Tibial artery (tissue), 4 donors: ENCODE measurements at regions of chr1 and their contacts with region 1.

Region 1: GRCh38 chr1:236523701-236524141 is at the start of gene LGALS8:
- DNase-seq: peak; percentile 90 to 93
- H3K4me3 ChIP-seq: peak within 1 kb of the TSS; percentile 87 to 92
- H3K27ac ChIP-seq: peak within 1 kb of the TSS; percentile 83 to 85
- H3K4me1 ChIP-seq: peaks cover 0 to 11% (median 2%) of the 10 kb centered on the region in 4 donors
- H3K27me3 ChIP-seq: no peaks in the 10 kb centered on the region
- CTCF ChIP-seq: no peak

Region 2: DNA sequence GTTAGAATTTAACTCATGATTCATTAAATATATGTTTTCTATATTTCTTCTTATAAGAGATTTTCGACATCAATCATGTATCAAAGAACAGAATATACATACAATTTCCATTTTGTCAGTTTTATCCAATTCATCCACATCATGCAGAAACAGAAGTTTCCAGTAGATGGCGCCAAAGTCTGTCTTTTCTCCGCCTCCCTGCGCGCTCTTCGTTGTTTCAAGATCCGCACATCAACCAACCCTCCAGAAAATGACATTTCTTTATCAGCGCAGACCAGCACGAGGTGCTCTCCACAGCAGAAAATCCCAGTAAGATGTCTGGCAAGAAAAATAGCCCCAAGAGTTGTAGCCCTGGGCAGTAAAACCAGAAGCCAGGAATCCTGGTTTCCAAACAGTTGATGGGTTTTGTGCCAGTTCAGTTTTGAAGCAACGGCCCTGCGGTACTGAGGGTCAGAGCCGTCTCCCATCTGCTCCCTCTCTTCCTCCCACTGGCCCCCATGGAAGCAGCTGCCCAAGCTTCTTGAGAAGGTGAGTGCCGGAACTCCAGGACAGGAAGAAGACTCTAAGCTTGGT is 420.0 kb before region 1 on chr1:
- intact Hi-C with region 1: loop called (anchors 10 kb)
- DNase-seq: peak in 1 of 2 donors; percentile 50
- H3K4me3 ChIP-seq: no peak overlapping the region
- H3K27ac ChIP-seq: no peak overlapping the region
- H3K4me1 ChIP-seq: no peaks in the 10 kb centered on the region
- H3K27me3 ChIP-seq: peaks cover 0 to 36% of the 10 kb centered on the region in 2 donors
- CTCF ChIP-seq: peak; percentile 75 to 82

Region 3: DNA sequence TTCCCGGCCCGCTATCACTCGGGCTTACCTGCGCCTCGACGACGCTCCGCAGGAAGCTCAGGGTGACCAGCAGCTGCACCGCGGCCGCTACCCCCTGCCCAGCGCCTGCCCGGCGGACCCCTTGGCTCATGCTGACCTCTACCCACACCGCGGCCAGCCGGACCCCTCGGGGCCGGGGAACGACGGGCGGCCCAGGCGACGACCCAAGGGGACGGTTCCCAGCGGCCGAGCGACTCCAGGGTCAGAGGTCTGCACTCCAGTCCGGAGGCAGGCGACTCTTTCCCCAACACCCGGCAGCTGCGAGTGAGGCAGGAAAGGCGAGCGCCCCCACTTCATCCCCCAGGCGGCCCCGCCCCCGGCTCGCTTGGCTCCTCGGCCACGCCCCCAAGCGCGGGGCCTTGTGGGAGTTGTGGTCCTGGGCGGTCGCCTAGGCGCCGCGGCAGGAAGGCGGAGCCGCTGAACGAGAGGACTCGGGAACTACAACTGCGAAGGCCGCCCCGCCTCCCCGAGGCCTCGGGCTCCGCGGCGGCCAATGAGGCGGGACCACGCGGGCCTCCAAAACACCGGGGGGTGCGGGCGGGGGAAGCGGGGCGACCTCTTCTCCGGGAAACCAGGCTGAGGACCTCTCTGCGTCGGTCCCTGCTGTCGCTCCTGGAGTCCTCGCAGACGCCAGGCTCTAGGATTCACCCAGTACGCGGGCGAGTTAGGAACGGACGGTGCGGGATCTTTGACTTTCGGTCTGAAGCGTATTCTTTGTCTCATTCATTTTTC is 241.9 kb before region 1 on chr1 and contains the start of gene ERO1B:
- intact Hi-C with region 1: loop called (anchors 5 kb)
- DNase-seq: peak; percentile 97 to 98
- H3K4me3 ChIP-seq: peak within 1 kb of the TSS; percentile 92 to 98
- H3K27ac ChIP-seq: peak within 1 kb of the TSS; percentile 81 to 89
- H3K4me1 ChIP-seq: peaks cover 0 to 12% (median 7%) of the 10 kb centered on the region in 4 donors
- H3K27me3 ChIP-seq: peaks cover 0 to 11% of the 10 kb centered on the region in 2 donors
- CTCF ChIP-seq: no peak